ENCODE measurements at regions of chr12 and their contacts with region 1.

Region 1: GRCh38 chr12:49130151-49131050 is 794 bp downstream of the TUBA1B start:
- DNase-seq: peak; percentile 83
- ATAC-seq: peak; percentile 65
- H3K4me3 ChIP-seq: peak overlapping the region; percentile 97 to 100
- H3K27ac ChIP-seq: peak overlapping the region; percentile 99
- H3K4me1 ChIP-seq: peaks cover 14% of the 10 kb centered on the region
- H3K27me3 ChIP-seq: no peaks in the 10 kb centered on the region
- CTCF ChIP-seq: peak; percentile 97

Region 2: DNA sequence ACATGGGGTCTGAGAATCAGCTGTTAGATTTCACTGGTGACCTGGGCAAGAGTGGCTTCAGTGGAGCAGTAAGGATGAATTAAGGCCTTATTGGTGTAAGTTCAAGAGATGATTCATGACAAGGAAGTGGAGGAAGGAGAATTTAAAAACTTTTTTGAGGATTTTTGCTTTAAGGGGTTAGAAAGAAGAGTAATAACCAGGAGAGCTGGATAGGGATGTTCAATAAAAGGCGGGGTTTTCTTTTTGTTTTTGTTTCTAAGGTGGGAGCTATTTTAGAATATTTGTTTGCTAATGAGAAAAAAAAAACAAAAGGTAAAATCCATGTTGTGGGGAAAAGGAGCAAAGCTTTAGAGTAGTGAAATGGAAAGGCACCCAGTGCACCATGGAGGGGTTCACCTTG is 16.0 kb after region 1 on chr12:
- CTCF ChIA-PET with region 1: interaction called, 14 read pairs
- POLR2A ChIA-PET with region 1: no interaction called
- in situ Hi-C with region 1: no loop called
- intact Hi-C with region 1: no loop called
- DNase-seq: no peak
- ATAC-seq: no peak
- H3K4me3 ChIP-seq: no peak overlapping the region
- H3K27ac ChIP-seq: no peak overlapping the region
- H3K4me1 ChIP-seq: no peaks in the 10 kb centered on the region
- H3K27me3 ChIP-seq: no peaks in the 10 kb centered on the region
- CTCF ChIP-seq: no peak

Region 3: GRCh38 chr12:49232940-49233841 is 102.8 kb after region 1 on chr12:
- CTCF ChIA-PET with region 1: no interaction called
- POLR2A ChIA-PET with region 1: interaction called, 3 read pairs
- in situ Hi-C with region 1: no loop called
- intact Hi-C with region 1: loop called (anchors 10 kb)
- DNase-seq: no peak
- ATAC-seq: no peak
- H3K4me3 ChIP-seq: no peak overlapping the region
- H3K27ac ChIP-seq: 0 out of 2 replicates have a peak overlapping the region, but pooled peaks have one; percentile 14
- H3K4me1 ChIP-seq: peaks cover 4% of the 10 kb centered on the region; the same call in 1 of the 2 replicates
- H3K27me3 ChIP-seq: no peaks in the 10 kb centered on the region
- CTCF ChIP-seq: no peak